CD4-positive, alpha-beta T cell (primary cell): ENCODE measurements at regions of chr18 and their contacts with region 1.

Region 1: DNA sequence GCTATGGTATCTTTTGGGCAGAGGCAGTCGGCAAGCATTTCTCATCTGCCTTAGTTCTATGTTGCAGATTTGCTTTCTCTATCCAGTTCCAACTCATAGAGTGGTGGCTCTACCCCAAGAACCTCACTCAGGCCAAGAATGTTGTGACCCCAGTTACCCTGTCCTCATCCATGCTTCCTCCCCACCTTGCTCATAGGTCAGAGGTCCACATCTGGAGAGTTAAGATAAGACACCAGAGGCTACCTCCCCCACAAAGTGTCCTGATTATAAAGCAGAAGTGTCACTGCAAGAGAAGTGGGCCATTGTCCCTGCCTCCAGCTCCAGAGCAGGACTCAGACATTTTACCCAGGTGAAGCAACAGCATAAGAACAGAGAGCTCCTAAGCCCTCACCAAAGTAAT is 276.8 kb upstream of the CHST9 start:
- DNase-seq: no peak
- ATAC-seq: no peak
- H3K4me3 ChIP-seq: no peak overlapping the region
- H3K4me3 Mint-ChIP-seq: no peak overlapping the region
- H3K27ac ChIP-seq: no peak overlapping the region
- H3K27ac Mint-ChIP-seq: no peak overlapping the region
- H3K4me1 ChIP-seq: no peaks in the 10 kb centered on the region
- H3K4me1 Mint-ChIP-seq: no peaks in the 10 kb centered on the region
- H3K27me3 ChIP-seq: no peaks in the 10 kb centered on the region
- H3K27me3 Mint-ChIP-seq: no peaks in the 10 kb centered on the region
- CTCF ChIP-seq: no peak

Region 2: DNA sequence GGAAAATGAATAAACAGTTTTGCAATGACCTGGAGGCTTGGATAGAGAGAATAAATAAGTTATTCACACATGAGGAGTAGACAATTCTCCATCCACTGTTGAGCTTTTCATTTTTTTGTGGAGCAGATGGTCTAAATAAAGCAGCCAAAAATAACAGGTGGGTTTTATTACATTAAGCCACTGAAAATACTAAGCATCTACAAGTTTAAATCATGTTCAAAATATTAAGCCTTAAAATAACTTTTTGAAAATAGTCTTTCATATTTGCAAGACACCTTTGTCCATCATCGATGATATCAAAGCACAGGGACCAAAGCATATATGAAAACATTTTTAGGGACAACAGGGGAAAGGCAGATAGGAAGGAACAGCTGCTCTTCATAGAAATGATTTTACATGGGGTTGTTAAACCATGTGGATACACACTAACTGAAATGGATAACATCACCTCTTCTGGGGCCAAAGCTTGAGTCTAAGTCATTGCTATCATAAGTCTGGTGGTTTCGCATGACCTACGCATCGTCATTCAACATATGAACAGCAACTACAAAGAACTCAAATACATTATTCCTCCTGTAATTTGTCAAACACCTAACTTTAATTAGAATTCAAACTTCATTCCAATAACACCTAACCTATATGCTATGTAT is 79.3 kb before region 1 on chr18:
- CTCF ChIA-PET with region 1: no interaction called
- POLR2A ChIA-PET with region 1: no interaction called
- intact Hi-C with region 1: loop called in 1 of 2 experiments (anchors 10 kb)
- DNase-seq: no peak
- ATAC-seq: no peak
- H3K4me3 ChIP-seq: no peak overlapping the region
- H3K4me3 Mint-ChIP-seq: no peak overlapping the region
- H3K27ac ChIP-seq: no peak overlapping the region
- H3K27ac Mint-ChIP-seq: no peak overlapping the region
- H3K4me1 ChIP-seq: no peaks in the 10 kb centered on the region
- H3K4me1 Mint-ChIP-seq: no peaks in the 10 kb centered on the region
- H3K27me3 ChIP-seq: no peaks in the 10 kb centered on the region
- H3K27me3 Mint-ChIP-seq: no peaks in the 10 kb centered on the region
- CTCF ChIP-seq: no peak

Region 3: GRCh38 chr18:27540111-27540510 is 78.2 kb after region 1 on chr18:
- CTCF ChIA-PET with region 1: no interaction called
- POLR2A ChIA-PET with region 1: no interaction called
- intact Hi-C with region 1: loop called in 1 of 2 experiments (anchors 10 kb)
- DNase-seq: no peak
- ATAC-seq: no peak
- H3K4me3 ChIP-seq: no peak overlapping the region
- H3K4me3 Mint-ChIP-seq: no peak overlapping the region
- H3K27ac ChIP-seq: no peak overlapping the region
- H3K27ac Mint-ChIP-seq: no peak overlapping the region
- H3K4me1 ChIP-seq: no peaks in the 10 kb centered on the region
- H3K4me1 Mint-ChIP-seq: no peaks in the 10 kb centered on the region
- H3K27me3 ChIP-seq: no peaks in the 10 kb centered on the region
- H3K27me3 Mint-ChIP-seq: no peaks in the 10 kb centered on the region
- CTCF ChIP-seq: no peak

Region 4: GRCh38 chr18:27931535-27931934 is 469.6 kb after region 1 on chr18:
- CTCF ChIA-PET with region 1: no interaction called
- POLR2A ChIA-PET with region 1: no interaction called
- intact Hi-C with region 1: no loop called
- DNase-seq: no peak
- ATAC-seq: no peak
- H3K4me3 ChIP-seq: no peak overlapping the region
- H3K4me3 Mint-ChIP-seq: no peak overlapping the region
- H3K27ac ChIP-seq: no peak overlapping the region
- H3K27ac Mint-ChIP-seq: no peak overlapping the region
- H3K4me1 ChIP-seq: no peaks in the 10 kb centered on the region
- H3K4me1 Mint-ChIP-seq: no peaks in the 10 kb centered on the region
- H3K27me3 ChIP-seq: no peaks in the 10 kb centered on the region
- H3K27me3 Mint-ChIP-seq: no peaks in the 10 kb centered on the region
- CTCF ChIP-seq: no peak